Activated CD4-positive, alpha-beta T cell treated with anti-CD3 and anti-CD28 coated beads for 36 hours (primary cell): ENCODE measurements at regions of chr17 and their contacts with region 1.

Region 1: GRCh38 chr17:2392252-2393173 is 8.3 kb downstream of the MNT start:
- DNase-seq: peak; percentile 99
- ATAC-seq: peak; percentile 72
- H3K4me3 Mint-ChIP-seq: peak overlapping the region; percentile 80
- H3K27ac Mint-ChIP-seq: peak overlapping the region; percentile 94
- H3K4me1 Mint-ChIP-seq: peaks cover 52% of the 10 kb centered on the region
- H3K27me3 Mint-ChIP-seq: no peaks in the 10 kb centered on the region

Region 2: DNA sequence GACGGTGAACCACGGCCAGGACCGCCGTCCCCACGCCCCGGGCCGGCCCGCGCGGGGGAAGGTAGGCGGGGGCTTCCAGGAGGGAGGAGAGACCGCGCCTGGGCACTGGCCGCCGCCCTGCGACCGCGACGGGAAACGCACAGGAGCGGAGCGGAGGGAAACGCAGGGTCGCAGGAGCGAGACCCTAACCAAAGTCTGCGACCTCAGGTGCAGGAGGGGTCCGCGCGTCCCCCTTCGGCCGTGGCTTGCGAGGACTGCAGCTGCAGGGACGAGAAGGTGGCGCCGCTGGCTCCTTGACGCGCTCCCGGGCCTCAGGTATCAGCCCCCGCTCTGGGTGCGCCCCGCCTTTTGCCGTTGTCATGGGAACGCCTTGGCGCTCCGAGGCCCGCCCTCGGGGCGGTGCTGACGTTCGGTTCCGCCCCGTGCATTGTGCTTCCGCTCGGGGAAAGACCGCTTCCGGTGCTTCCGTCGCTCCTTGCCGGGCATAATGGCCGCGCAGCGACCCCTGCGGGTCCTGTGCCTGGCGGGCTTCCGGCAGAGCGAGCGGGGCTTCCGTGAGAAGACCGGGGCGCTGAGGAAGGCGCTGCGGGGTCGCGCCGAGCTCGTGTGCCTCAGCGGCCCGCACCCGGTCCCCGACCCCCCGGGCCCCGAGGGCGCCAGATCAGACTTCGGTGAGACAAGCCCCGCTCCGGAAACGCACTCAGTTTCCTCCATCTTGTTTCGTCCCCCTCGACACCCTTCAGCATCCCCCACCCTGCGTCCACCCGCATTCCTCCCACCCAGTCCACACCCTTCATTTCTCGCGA is 350.7 kb before region 1 on chr17 and contains the start of gene OVCA2:
- CTCF ChIA-PET with region 1: no interaction called
- POLR2A ChIA-PET with region 1: no interaction called
- intact Hi-C with region 1: loop called in 1 of 2 experiments (anchors 5 kb)
- DNase-seq: peak; percentile 99
- ATAC-seq: peak; percentile 92
- H3K4me3 Mint-ChIP-seq: peak within 1 kb of the TSS; percentile 95
- H3K27ac Mint-ChIP-seq: peak within 1 kb of the TSS; percentile 95
- H3K4me1 Mint-ChIP-seq: peaks cover 23% of the 10 kb centered on the region
- H3K27me3 Mint-ChIP-seq: no peaks in the 10 kb centered on the region
- total RNA-seq, gene OVCA2: 31.4 to 38.6 TPM

Region 3: DNA sequence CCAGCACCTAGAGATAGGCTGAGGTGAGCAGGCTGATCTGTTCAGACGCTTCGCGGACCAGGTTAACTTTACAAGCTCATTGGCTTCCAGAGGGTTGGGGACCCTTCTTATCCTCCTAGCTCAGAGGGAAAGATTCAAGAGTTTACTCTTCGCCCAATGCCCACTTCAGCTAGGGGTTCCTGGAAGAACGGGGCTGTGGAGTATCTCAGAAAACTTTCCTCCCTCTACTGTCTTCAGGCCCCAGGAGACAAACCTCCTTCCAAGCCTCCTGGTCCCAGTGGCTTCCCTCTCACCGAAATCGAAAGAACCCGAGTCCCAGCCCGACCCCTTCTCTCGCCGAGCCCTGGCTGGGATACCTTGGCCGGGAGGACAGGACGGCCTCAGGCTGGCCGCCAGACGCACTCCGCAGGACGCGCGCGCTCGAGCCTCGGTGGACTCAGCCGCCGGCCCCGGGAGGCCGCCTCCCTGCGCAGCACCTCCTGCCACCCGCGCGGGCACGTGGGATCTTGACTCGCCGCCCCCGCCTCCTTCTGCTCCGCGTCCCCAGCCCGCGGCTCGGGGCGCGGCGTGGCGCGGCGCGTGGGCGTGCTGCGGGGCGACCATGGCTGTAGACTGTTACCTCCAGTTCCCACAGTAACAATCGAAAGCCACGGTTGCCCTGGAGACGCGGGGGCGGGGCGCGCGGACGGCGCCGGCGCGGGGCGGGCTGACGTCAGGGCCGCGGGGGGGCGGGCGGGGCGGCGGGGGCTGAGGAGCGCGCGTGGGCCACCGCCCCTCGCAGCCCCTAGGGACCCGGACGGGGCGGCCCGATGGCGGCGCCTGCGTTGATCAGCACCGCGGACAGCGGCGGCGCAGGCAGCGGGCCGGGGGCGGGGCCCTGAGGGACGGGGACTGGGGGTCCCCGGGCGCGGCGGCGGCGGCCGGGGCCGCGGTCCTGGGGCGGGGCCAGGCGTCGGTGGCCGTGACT is 342.9 kb before region 1 on chr17:
- CTCF ChIA-PET with region 1: no interaction called
- POLR2A ChIA-PET with region 1: no interaction called
- intact Hi-C with region 1: loop called (anchors 1 to 5 kb)
- DNase-seq: peak; percentile 92
- ATAC-seq: peak; percentile 31
- H3K4me3 Mint-ChIP-seq: peak overlapping the region; percentile 72
- H3K27ac Mint-ChIP-seq: no peak overlapping the region
- H3K4me1 Mint-ChIP-seq: peaks cover 29% of the 10 kb centered on the region
- H3K27me3 Mint-ChIP-seq: peaks cover 11% of the 10 kb centered on the region

Region 4: DNA sequence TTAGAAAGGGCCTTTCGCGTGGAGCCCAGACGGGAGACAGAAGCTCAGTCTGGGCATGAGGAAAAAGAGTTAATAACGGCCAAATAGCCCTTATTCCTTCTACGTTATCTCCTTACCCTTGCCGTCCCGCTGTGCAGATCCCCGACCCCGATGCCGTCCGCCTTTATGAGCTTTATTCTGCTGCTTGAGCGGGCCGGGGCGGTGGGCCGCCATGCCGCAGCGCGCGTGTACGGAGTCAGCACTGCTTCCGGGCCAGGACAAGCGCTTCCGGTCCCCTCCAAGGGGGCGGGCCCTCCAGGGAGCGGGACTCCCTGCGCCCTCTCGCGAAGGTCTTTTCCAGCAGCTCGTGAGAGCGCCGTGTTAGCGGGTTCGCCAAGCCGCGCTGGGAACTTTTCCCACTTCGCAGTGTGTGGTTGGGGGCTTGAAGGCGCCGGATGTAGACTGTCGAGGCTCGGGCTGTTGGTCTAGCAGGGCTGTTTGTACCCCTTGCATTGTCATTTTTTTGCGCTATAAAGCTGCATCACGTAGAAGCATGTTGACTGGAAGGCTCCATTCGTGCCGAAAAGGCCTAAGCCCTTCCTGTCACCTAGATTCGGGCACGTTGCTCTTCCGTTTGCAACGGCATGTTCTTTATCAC is 56.2 kb before region 1 on chr17 and contains the start of gene TSR1:
- CTCF ChIA-PET with region 1: no interaction called
- POLR2A ChIA-PET with region 1: interaction called, 16 read pairs
- intact Hi-C with region 1: loop called in 1 of 2 experiments (anchors 1 kb)
- DNase-seq: peak; percentile 94
- ATAC-seq: peak; percentile 93
- H3K4me3 Mint-ChIP-seq: no peak within 1 kb of the TSS
- H3K27ac Mint-ChIP-seq: peak within 1 kb of the TSS; percentile 99
- H3K4me1 Mint-ChIP-seq: peaks cover 14% of the 10 kb centered on the region
- H3K27me3 Mint-ChIP-seq: no peaks in the 10 kb centered on the region
- total RNA-seq, gene TSR1: 59.3 to 77.0 TPM

Region 5: DNA sequence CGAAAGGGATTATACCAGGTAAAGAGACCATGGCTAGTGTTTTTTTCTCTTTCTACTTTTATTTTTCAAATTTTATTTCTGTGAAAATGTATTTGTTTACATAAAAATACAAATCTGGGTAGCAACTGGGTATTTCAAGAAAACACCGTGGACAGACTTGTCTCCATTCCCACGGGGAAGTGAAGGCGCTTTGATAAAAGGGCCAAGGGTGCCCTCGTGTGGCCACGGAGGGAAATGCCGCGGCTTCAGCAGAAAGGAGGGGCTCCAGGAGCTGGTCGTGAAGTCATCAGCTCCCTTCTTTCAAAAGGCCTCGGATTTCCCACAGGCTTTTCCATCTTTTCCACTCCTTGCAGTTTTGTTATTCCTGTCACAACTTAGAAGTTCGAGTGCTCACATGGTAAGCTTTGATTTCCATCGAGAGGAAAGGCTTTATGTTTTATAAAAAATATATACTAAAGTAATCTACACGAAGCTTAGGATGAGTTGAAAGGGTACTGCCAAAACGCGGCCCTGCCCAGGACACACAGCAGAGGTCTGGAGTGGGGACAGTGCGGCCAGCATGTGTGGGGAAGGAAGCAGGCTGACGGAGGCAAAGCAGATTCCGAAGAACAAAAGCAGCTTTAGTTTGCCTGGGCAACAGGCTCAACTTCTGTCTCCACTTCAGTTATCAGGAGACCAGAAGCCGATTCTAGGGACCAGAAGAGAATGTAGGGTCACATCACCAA is 23.7 kb after region 1 on chr17:
- CTCF ChIA-PET with region 1: interaction called, 36 read pairs
- POLR2A ChIA-PET with region 1: interaction called, 7 read pairs
- intact Hi-C with region 1: no loop called
- DNase-seq: peak; percentile 90
- ATAC-seq: peak; percentile 82
- H3K4me3 Mint-ChIP-seq: no peak overlapping the region
- H3K27ac Mint-ChIP-seq: no peak overlapping the region
- H3K4me1 Mint-ChIP-seq: peaks cover 4% of the 10 kb centered on the region
- H3K27me3 Mint-ChIP-seq: no peaks in the 10 kb centered on the region

Region 6: GRCh38 chr17:2511462-2512369 is 119.2 kb after region 1 on chr17 and contains the start of gene METTL16:
- CTCF ChIA-PET with region 1: no interaction called
- POLR2A ChIA-PET with region 1: no interaction called
- intact Hi-C with region 1: loop called in 1 of 2 experiments (anchors 1 kb)
- DNase-seq: peak; percentile 100
- ATAC-seq: peak; percentile 99
- H3K4me3 Mint-ChIP-seq: no peak within 1 kb of the TSS
- H3K27ac Mint-ChIP-seq: no peak within 1 kb of the TSS
- H3K4me1 Mint-ChIP-seq: peaks cover 17% of the 10 kb centered on the region
- H3K27me3 Mint-ChIP-seq: no peaks in the 10 kb centered on the region
- total RNA-seq, gene METTL16: 50.1 to 61.6 TPM

Region 7: DNA sequence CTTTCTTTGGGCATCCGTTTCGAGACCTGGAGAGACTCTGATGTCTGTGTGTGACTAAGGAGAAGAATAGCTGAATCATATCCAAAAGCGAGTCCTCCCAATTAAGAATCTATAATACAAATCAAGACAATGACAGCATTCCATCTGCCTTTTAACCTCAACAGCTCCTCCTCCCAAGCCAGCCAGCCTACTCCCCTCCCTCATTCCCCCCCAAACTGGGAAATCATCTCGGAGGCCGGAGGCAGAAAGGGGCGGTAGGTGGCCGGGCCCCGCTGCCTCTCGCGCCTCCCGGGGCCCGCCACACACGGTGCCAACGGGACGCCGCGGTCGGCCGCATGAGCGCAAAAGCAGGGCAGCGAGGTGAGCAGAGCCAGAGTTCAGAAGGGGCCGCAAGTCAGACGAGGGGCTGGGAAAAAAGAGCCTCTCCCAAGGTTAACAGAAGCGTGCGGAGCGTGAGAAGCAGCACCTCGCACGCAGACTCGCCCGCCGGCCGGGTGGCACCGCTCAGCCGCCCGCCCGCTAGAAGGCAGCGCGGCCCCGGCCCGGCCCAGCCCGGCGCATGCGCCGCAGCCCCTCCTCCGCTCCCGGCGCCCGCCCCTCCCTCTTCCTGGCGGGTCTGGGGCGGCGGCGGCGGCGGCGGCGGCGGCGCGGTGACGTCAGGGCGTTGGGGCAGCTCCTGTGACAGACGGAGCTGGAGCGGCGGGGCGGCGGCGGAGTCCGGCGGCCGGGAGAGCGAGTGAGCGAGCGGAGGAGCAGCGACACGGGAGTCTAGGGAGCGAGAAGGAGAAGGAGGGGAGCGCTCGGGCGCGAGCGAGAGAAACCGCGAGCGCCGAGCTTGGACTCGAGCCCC is 200.7 kb after region 1 on chr17 and contains the start of gene PAFAH1B1:
- CTCF ChIA-PET with region 1: no interaction called
- POLR2A ChIA-PET with region 1: interaction called, 5 read pairs
- intact Hi-C with region 1: loop called in 1 of 2 experiments (anchors 2 kb)
- DNase-seq: peak; percentile 98
- ATAC-seq: peak; percentile 84
- H3K4me3 Mint-ChIP-seq: peak within 1 kb of the TSS; percentile 79
- H3K27ac Mint-ChIP-seq: peak within 1 kb of the TSS; percentile 88
- H3K4me1 Mint-ChIP-seq: peaks cover 25% of the 10 kb centered on the region
- H3K27me3 Mint-ChIP-seq: no peaks in the 10 kb centered on the region
- total RNA-seq, gene PAFAH1B1: 163 to 167 TPM